Breast epithelium (tissue), 4 donors: ENCODE measurements at regions of chr18 and their contacts with region 1.

Region 1: GRCh38 chr18:57959278-57959677 is 84.7 kb upstream of the NEDD4L start:
- DNase-seq: peak in 1 of 2 donors; percentile 33
- H3K4me3 ChIP-seq: no peak overlapping the region
- H3K27ac ChIP-seq: no peak overlapping the region
- H3K4me1 ChIP-seq: no peaks in the 10 kb centered on the region
- H3K27me3 ChIP-seq: no peaks in the 10 kb centered on the region
- CTCF ChIP-seq: peak in 1 of 3 donors; percentile 20
- POLR2A ChIP-seq: no peak

Region 2: GRCh38 chr18:57881818-57882413 is 77.4 kb before region 1 on chr18:
- intact Hi-C with region 1: no loop called
- DNase-seq: peak; percentile 38 to 60
- H3K4me3 ChIP-seq: no peak overlapping the region
- H3K27ac ChIP-seq: no peak overlapping the region
- H3K4me1 ChIP-seq: no peaks in the 10 kb centered on the region
- H3K27me3 ChIP-seq: no peaks in the 10 kb centered on the region
- CTCF ChIP-seq: peak; percentile 75 to 91 (median 89)
- POLR2A ChIP-seq: no peak

Region 3: DNA sequence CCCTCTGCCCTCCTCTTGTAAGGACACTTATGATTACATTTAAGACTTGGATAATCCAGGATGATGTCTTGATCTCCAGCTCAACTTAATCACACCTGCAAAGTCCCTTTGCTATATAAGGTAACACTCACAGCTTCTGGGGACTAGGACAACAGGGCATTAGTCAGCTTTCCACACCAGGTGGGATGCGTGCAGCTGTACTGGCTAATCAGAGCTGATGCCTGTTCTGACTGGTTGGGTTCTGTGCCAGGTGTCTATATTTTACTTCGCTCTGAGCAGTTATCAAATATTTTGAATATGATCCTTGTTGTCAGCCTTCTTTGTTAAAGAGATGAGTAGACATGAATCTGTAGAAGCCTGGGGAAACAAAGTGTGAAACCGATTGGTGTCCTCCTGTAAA is 40.7 kb before region 1 on chr18:
- intact Hi-C with region 1: loop called (anchors 2 kb)
- DNase-seq: no peak
- H3K4me3 ChIP-seq: no peak overlapping the region
- H3K27ac ChIP-seq: no peak overlapping the region
- H3K4me1 ChIP-seq: no peaks in the 10 kb centered on the region
- H3K27me3 ChIP-seq: no peaks in the 10 kb centered on the region
- CTCF ChIP-seq: no peak
- POLR2A ChIP-seq: no peak

Region 4: GRCh38 chr18:57970356-57971080 is 11.2 kb after region 1 on chr18:
- intact Hi-C with region 1: loop called (anchors 1 kb)
- DNase-seq: no peak
- H3K4me3 ChIP-seq: no peak overlapping the region
- H3K27ac ChIP-seq: no peak overlapping the region
- H3K4me1 ChIP-seq: no peaks in the 10 kb centered on the region
- H3K27me3 ChIP-seq: no peaks in the 10 kb centered on the region
- CTCF ChIP-seq: no peak
- POLR2A ChIP-seq: no peak